ENCODE measurements at regions of chr4 and their contacts with region 1.

Region 1: GRCh38 chr4:165464813-165465381 is 86.1 kb downstream of the CPE start:
- DNase-seq: peak in 1 of 2 donors; percentile 8
- ATAC-seq: peak; percentile 58

Region 2: GRCh38 chr4:165131247-165131832 is 333.6 kb before region 1 on chr4:
- intact Hi-C with region 1: loop called in 1 of 2 experiments (anchors 2 kb)
- DNase-seq: peak in 1 of 2 donors; percentile 68
- ATAC-seq: peak; percentile 64

Region 3: GRCh38 chr4:165355900-165356300 is 109.0 kb before region 1 on chr4:
- intact Hi-C with region 1: loop called in 1 of 2 experiments (anchors 10 kb)
- DNase-seq: peak in 1 of 2 donors; percentile 43
- ATAC-seq: peak; percentile 79

Measured in left colon (tissue), 2 donors.